K562 (cell line): ENCODE measurements at regions of chr1 and their contacts with region 1.

Region 1: GRCh38 chr1:212981571-212982328 is 31.4 kb downstream of the VASH2 start:
- DNase-seq: no peak
- ATAC-seq: no peak
- H3K4me3 ChIP-seq: no peak overlapping the region
- H3K27ac ChIP-seq: no peak overlapping the region
- H3K4me1 ChIP-seq: no peaks in the 10 kb centered on the region
- H3K27me3 ChIP-seq: peaks cover 33 to 70% of the 10 kb centered on the region in 2 experiments; a peak in 4 of 5 replicates
- CTCF ChIP-seq: no peak
- EP300 ChIP-seq: no peak
- POLR2A ChIP-seq: no peak
- RAD21 ChIP-seq: no peak

Region 2: DNA sequence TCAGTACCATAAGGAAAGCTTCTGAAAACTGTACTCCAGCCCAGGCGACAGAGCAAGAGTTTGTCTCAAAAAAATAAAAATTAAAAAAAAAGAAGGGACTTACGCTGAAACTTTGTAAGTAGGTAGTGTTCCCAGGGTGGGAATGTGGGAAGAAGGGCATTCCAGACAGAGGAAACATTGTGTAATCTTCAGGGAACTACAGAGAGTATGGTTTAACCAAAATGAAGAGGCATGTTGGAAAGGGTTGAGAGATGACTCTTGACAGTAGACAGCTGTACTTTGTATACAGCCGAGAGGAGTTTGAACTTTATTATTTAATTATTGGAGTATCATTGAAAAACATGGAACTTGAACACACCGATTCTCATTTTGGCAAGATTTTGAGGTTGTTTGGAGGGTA is 653.5 kb before region 1 on chr1:
- CTCF ChIA-PET with region 1: no interaction called
- POLR2A ChIA-PET with region 1: no interaction called
- in situ Hi-C with region 1: no loop called
- intact Hi-C with region 1: no loop called
- DNase-seq: no peak
- ATAC-seq: no peak
- H3K4me3 ChIP-seq: no peak overlapping the region
- H3K27ac ChIP-seq: no peak overlapping the region
- H3K4me1 ChIP-seq: no peaks in the 10 kb centered on the region
- H3K27me3 ChIP-seq: no peaks in the 10 kb centered on the region
- CTCF ChIP-seq: no peak
- EP300 ChIP-seq: no peak
- POLR2A ChIP-seq: no peak
- RAD21 ChIP-seq: no peak

Region 3: DNA sequence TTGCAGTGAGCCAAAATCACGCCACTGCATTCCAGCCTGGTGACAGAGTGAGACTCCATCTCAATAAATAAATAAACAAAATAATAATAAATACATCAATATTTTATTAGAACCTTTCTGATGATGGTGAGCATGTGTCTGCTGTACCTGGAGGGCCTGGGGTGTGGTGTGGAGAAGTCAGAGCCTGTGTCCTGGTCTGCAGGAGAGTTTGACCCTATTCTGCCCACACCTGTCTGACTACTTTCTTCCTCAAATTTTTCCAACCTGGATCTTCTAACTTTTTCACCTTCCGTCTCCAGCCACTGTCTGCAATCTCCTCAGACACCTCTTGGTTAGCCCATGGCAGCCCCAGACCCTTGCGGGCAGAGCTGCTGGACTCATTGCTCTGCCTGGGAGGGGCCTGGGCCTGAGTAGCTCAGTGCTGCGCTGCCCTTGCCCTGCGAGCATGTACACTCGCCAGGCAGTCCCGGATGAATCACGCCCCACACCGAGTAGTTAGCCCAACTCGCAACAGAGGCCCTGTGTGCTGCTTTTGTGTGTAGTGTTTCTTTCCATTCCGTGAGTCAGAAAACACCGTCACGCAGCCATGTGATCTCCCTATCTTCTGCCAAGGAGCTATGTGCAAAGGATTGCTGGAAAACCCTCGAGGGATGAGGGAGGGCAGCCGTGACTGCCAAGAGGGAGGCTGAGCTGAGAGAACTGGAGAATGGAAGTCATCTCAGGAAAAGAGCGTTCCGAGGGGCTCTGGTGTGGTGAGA is 511.9 kb before region 1 on chr1:
- CTCF ChIA-PET with region 1: no interaction called
- POLR2A ChIA-PET with region 1: no interaction called
- in situ Hi-C with region 1: loop called (anchors 10 kb)
- intact Hi-C with region 1: no loop called
- DNase-seq: no peak
- ATAC-seq: 0 out of 3 replicates have a peak, but pooled peaks have one; percentile 25
- H3K4me3 ChIP-seq: no peak overlapping the region
- H3K27ac ChIP-seq: no peak overlapping the region
- H3K4me1 ChIP-seq: peaks cover 0 to 9% of the 10 kb centered on the region in 2 experiments; a peak in 3 of 5 replicates
- H3K27me3 ChIP-seq: peaks cover 13 to 42% of the 10 kb centered on the region in 2 experiments; a peak in 4 of 5 replicates
- CTCF ChIP-seq: no peak
- EP300 ChIP-seq: no peak
- POLR2A ChIP-seq: no peak
- RAD21 ChIP-seq: no peak

Region 4: GRCh38 chr1:212665241-212666115 is 316.3 kb before region 1 on chr1:
- CTCF ChIA-PET with region 1: no interaction called
- POLR2A ChIA-PET with region 1: no interaction called
- in situ Hi-C with region 1: no loop called
- intact Hi-C with region 1: loop called (anchors 5 kb)
- DNase-seq: peak; percentile 85 to 88 (median 86)
- ATAC-seq: peak; percentile 99
- H3K4me3 ChIP-seq: peak overlapping the region; percentile 40
- H3K27ac ChIP-seq: no peak overlapping the region
- H3K4me1 ChIP-seq: peaks cover 3 to 11% of the 10 kb centered on the region in 2 experiments; a peak in 4 of 5 replicates
- H3K27me3 ChIP-seq: peaks cover 13 to 35% of the 10 kb centered on the region in 2 experiments; a peak in 4 of 5 replicates
- CTCF ChIP-seq: peak; percentile 94 to 95 (median 95)
- EP300 ChIP-seq: no peak
- POLR2A ChIP-seq: no peak
- RAD21 ChIP-seq: peak; percentile 97 to 98

Region 5: GRCh38 chr1:213122514-213122929 is 140.8 kb after region 1 on chr1:
- CTCF ChIA-PET with region 1: no interaction called
- POLR2A ChIA-PET with region 1: no interaction called
- in situ Hi-C with region 1: no loop called
- intact Hi-C with region 1: no loop called
- DNase-seq: peak; percentile 19 to 77 (median 26)
- ATAC-seq: 0 out of 3 replicates have a peak, but pooled peaks have one; percentile 21
- H3K4me3 ChIP-seq: no peak overlapping the region
- H3K27ac ChIP-seq: peak overlapping the region; percentile 10; the same call in 2 of the 3 replicates
- H3K4me1 ChIP-seq: peaks cover 0 to 31% of the 10 kb centered on the region in 2 experiments
- H3K27me3 ChIP-seq: no peaks in the 10 kb centered on the region
- CTCF ChIP-seq: peak in 2 of 3 experiments; percentile 29 to 70; a peak in 4 of 6 replicates
- EP300 ChIP-seq: no peak
- POLR2A ChIP-seq: no peak
- RAD21 ChIP-seq: peak; percentile 45 to 66